ENCODE measurements at regions of chr20 and their contacts with region 1.

Region 1: GRCh38 chr20:1438361-1438760 is 28.3 kb downstream of the NSFL1C start:
- DNase-seq: no peak
- ATAC-seq: no peak
- H3K4me3 ChIP-seq: no peak overlapping the region
- H3K27ac ChIP-seq: no peak overlapping the region
- H3K4me1 ChIP-seq: peaks cover 0 to 25% of the 10 kb centered on the region in 2 donors
- H3K27me3 ChIP-seq: no peaks in the 10 kb centered on the region
- CTCF ChIP-seq: no peak

Region 2: GRCh38 chr20:1185790-1186334 is 252.5 kb before region 1 on chr20:
- intact Hi-C with region 1: no loop called
- DNase-seq: peak in 1 of 4 donors; percentile 64
- ATAC-seq: peak; percentile 85
- H3K4me3 ChIP-seq: peak overlapping the region; percentile 35 to 41
- H3K27ac ChIP-seq: no peak overlapping the region
- H3K4me1 ChIP-seq: peaks cover 5 to 13% of the 10 kb centered on the region in 2 donors
- H3K27me3 ChIP-seq: peaks cover 10 to 46% of the 10 kb centered on the region in 2 donors
- CTCF ChIP-seq: peak; percentile 27 to 44

Region 3: DNA sequence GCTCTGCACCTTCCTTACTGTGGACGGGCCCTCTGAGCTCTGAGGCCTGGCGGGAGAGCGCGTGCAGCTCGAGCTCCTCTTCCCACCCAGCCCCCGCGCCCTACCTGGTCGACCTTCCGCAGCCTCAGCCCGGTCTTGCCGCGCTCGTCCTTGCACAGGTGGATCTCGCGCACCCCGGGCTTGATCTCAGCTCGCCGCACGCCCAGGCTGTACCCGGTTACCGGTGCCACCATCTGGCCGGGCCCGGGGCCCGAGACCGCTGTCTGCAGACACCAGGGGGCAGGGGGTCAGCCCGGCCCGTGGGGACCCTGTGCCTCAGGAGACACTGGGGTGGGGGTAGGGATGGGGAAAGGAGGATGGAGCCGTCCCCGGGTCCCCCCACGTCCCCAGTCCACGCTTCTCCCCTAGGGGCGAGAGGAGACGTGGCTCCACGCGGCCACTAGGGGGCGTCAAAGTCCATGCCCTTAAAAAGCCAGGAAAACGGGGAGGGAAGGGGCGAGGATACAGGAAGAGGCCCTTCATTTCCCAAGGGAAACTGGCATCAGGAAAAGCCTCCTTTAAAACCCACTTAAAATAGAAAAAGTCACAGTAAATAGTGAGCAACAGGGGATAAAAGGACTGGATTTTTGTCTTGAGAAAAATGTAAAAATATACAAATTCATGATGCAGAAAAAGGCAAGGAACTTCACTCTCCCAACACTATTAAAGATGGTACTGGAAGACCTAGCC is 125.0 kb before region 1 on chr20:
- intact Hi-C with region 1: loop called in 1 of 2 experiments (anchors 2 kb)
- DNase-seq: peak; percentile 63 to 92 (median 78)
- ATAC-seq: peak; percentile 94
- H3K4me3 ChIP-seq: no peak overlapping the region
- H3K27ac ChIP-seq: peak overlapping the region in 1 of 2 donors; percentile 21
- H3K4me1 ChIP-seq: peaks cover 0 to 11% of the 10 kb centered on the region in 2 donors
- H3K27me3 ChIP-seq: no peaks in the 10 kb centered on the region
- CTCF ChIP-seq: peak; percentile 96 to 97

Region 4: GRCh38 chr20:1757072-1757471 is 318.7 kb after region 1 on chr20:
- intact Hi-C with region 1: no loop called
- DNase-seq: no peak
- ATAC-seq: no peak
- H3K4me3 ChIP-seq: no peak overlapping the region
- H3K27ac ChIP-seq: peak overlapping the region in 1 of 2 donors; percentile 58
- H3K4me1 ChIP-seq: peaks cover 0 to 15% of the 10 kb centered on the region in 2 donors
- H3K27me3 ChIP-seq: no peaks in the 10 kb centered on the region
- CTCF ChIP-seq: no peak

Measured in left lung (tissue), 14 donors.